ENCODE measurements at regions of chr1 and their contacts with region 1.

Region 1: DNA sequence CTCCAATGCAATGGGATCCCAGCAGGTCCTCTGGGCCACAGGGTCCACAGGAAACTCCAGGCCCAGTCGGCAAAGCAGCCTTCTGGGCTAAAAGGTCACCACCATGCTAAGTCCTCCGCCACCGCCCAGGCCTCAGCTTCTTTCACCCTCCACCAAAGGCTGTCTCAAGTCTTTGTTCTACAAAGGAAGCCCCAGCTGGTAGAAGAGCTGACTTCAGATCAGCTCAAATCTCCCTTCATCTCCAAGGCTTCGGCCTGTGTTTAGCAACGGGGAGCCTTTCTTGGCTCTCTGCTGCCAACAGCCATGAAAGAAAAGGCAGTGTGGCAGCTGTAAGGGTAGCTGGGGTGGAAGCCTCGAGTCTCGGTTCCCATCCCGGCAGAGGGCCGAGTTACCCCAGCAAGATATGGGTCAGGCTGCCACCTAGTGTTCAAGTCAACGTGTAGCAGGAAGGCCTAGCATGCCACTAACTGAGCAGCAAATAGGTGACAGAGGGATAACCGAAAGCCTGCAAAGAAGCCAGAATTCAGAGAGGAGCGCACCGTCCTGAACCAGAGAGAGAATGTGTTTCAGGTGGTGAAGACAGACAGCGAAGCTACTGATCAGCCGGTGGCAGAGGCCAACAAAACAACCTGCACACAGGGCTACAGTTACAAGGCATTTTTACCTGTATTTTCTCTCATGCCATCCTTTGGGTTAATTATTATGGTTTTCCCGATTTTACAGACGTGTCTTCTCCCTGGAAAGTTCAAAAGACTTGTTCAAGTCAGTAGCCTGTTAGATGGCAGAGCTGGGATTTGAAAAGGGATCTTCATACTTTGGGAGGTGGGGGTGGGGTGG is 26.8 kb upstream of the CRNN start:
- DNase-seq: peak; percentile 79
- ATAC-seq: peak; percentile 97
- H3K4me3 Mint-ChIP-seq: no peak overlapping the region
- H3K27ac Mint-ChIP-seq: no peak overlapping the region
- H3K4me1 Mint-ChIP-seq: no peaks in the 10 kb centered on the region
- H3K27me3 Mint-ChIP-seq: peaks cover 15% of the 10 kb centered on the region

Region 2: GRCh38 chr1:152347116-152347728 is 93.6 kb before region 1 on chr1:
- CTCF ChIA-PET with region 1: interaction called, 13 read pairs
- DNase-seq: peak; percentile 64
- ATAC-seq: peak; percentile 45
- H3K4me3 Mint-ChIP-seq: no peak overlapping the region
- H3K27ac Mint-ChIP-seq: no peak overlapping the region
- H3K4me1 Mint-ChIP-seq: no peaks in the 10 kb centered on the region
- H3K27me3 Mint-ChIP-seq: peaks cover 23% of the 10 kb centered on the region

Region 3: DNA sequence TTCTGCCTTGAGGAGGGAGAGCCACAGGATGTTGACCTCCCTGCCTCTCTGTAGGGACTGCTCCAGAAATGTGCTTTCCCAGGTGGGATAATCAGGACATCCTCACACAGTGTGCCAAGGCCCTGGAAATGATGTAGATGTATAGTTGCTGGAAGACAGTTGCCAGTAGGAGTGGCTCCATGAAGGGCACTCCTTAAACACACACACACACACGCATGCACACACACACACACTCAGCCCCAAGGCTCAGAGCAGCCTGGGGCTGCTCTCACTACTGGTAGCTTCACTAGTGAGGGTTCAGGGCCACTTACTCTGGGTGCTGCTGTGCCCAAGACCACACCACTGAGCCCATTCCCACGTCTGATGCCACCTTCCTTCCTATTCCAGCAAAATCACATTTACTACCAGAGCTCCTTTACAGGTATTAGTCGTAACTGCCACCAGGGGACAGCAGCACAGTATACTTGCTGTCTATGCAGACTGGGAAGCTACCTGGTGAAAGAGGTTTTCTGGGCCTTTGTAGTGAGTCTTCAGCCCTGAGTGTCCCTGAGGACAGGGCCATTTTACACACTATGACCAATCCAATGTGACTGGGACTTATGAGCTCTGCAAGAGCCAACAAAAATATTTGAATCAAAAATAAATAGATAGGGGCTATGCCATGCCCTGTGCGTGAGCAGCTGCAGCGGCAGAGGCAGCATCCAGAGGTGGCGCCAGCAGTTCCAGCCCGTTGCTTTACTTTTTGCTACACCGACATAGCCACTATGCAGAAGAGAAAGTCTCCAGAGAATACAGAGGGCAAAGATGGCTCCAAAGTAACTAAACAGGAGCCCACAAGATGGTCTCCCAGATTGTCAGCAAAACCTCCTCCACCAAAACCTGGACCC is 41.8 kb before region 1 on chr1:
- CTCF ChIA-PET with region 1: interaction called, 15 read pairs
- DNase-seq: no peak
- ATAC-seq: no peak
- H3K4me3 Mint-ChIP-seq: no peak overlapping the region
- H3K27ac Mint-ChIP-seq: no peak overlapping the region
- H3K4me1 Mint-ChIP-seq: peaks cover under 1% of the 10 kb centered on the region
- H3K27me3 Mint-ChIP-seq: peaks cover 7% of the 10 kb centered on the region

Region 4: GRCh38 chr1:152479792-152480595 is 39.1 kb after region 1 on chr1:
- CTCF ChIA-PET with region 1: no interaction called
- DNase-seq: peak; percentile 66
- ATAC-seq: peak; percentile 53
- H3K4me3 Mint-ChIP-seq: no peak overlapping the region
- H3K27ac Mint-ChIP-seq: no peak overlapping the region
- H3K4me1 Mint-ChIP-seq: peaks cover 5% of the 10 kb centered on the region
- H3K27me3 Mint-ChIP-seq: no peaks in the 10 kb centered on the region

Measured in activated CD8-positive, alpha-beta memory T cell treated with anti-CD3 and anti-CD28 coated beads, Interleukin-2, amount 10 ng/mL, durations not matched to agents 7 days and 5 days (primary cell).